A549 (cell line): ENCODE measurements at regions of chr16 and their contacts with region 1.

Region 1: DNA sequence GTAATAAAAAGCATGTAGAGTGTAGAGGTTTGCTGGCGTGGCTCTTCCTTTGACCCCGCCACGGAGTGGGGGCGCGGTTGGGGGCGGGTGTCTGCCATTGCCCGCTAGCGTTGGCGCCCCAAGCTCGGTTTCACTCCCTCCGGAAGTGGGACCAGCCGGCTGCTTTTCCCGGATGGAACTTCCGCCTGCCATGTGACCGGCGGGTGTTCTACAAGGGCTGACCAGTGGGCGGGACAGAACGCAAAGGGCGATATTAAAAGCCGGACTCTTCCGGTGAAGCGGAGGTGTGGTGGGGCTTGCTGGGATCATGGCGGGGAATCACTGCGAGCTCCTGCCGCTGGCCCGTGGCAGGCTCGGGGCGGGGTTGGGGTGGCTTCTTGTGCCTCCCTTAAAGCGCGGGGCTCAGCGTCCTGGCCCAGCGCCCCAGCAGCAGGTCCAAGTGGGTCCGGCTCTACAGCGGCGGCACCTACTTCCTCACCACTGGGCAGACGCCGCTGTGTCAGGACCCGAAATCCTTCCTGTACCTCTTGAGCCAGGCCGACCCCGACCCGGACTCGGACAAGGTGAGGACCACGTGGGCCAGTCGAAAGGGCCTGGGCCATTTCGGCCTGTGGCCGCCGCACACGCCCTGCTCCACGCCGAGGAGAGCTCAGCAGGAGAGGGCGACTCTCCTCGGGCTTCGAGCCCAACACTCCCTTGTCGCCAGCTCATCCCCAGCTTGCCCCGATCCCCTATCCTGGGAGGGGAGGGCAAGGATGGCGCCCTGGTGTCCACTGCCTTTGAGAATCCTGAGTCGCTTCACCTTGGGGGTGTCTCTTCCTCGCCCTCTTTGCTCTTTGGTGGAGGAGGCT is 65.6 kb downstream of the PDPK1 start:
- DNase-seq: peak; percentile 97 to 99
- ATAC-seq: peak; percentile 95 to 98
- H3K4me3 ChIP-seq: peak overlapping the region; percentile 88
- H3K27ac ChIP-seq: peak overlapping the region; percentile 92 to 97
- H3K4me1 ChIP-seq: peaks cover 10% of the 10 kb centered on the region; the same call in 1 of the 3 replicates
- CTCF ChIP-seq: no peak
- EP300 ChIP-seq: no peak
- POLR2A ChIP-seq: peak; percentile 94
- RAD21 ChIP-seq: peak in 1 of 2 experiments; percentile 1; a peak in 2 of 5 replicates

Region 2: GRCh38 chr16:2591476-2592240 is 11.7 kb before region 1 on chr16:
- CTCF ChIA-PET with region 1: interaction called, 5 read pairs
- POLR2A ChIA-PET with region 1: interaction called, 12 read pairs
- DNase-seq: no peak
- ATAC-seq: no peak
- H3K4me3 ChIP-seq: no peak overlapping the region
- H3K27ac ChIP-seq: no peak overlapping the region
- H3K4me1 ChIP-seq: no peaks in the 10 kb centered on the region
- CTCF ChIP-seq: no peak
- EP300 ChIP-seq: no peak
- POLR2A ChIP-seq: no peak
- RAD21 ChIP-seq: no peak

Region 3: GRCh38 chr16:2715519-2715918 is 112.1 kb after region 1 on chr16:
- CTCF ChIA-PET with region 1: no interaction called
- POLR2A ChIA-PET with region 1: no interaction called
- DNase-seq: no peak
- ATAC-seq: no peak
- H3K4me3 ChIP-seq: no peak overlapping the region
- H3K27ac ChIP-seq: no peak overlapping the region
- H3K4me1 ChIP-seq: peaks cover 16% of the 10 kb centered on the region; the same call in 2 of the 3 replicates
- CTCF ChIP-seq: no peak
- EP300 ChIP-seq: no peak
- POLR2A ChIP-seq: no peak
- RAD21 ChIP-seq: no peak